Sigmoid colon (tissue), 7 donors: ENCODE measurements at regions of chr10 and their contacts with region 1.

Region 1: GRCh38 chr10:99945263-99945662 is 64.5 kb downstream of the DNMBP start:
- DNase-seq: peak; percentile 78
- H3K4me3 ChIP-seq: no peak overlapping the region
- H3K27ac ChIP-seq: peak overlapping the region in 3 of 4 donors; percentile 35 to 64 (median 48)
- H3K4me1 ChIP-seq: peaks cover 0 to 42% (median 25%) of the 10 kb centered on the region in 4 donors
- H3K27me3 ChIP-seq: no peaks in the 10 kb centered on the region
- CTCF ChIP-seq: no peak
- EP300 ChIP-seq: peak in 1 of 4 donors; percentile 16
- POLR2A ChIP-seq: no peak

Region 2: DNA sequence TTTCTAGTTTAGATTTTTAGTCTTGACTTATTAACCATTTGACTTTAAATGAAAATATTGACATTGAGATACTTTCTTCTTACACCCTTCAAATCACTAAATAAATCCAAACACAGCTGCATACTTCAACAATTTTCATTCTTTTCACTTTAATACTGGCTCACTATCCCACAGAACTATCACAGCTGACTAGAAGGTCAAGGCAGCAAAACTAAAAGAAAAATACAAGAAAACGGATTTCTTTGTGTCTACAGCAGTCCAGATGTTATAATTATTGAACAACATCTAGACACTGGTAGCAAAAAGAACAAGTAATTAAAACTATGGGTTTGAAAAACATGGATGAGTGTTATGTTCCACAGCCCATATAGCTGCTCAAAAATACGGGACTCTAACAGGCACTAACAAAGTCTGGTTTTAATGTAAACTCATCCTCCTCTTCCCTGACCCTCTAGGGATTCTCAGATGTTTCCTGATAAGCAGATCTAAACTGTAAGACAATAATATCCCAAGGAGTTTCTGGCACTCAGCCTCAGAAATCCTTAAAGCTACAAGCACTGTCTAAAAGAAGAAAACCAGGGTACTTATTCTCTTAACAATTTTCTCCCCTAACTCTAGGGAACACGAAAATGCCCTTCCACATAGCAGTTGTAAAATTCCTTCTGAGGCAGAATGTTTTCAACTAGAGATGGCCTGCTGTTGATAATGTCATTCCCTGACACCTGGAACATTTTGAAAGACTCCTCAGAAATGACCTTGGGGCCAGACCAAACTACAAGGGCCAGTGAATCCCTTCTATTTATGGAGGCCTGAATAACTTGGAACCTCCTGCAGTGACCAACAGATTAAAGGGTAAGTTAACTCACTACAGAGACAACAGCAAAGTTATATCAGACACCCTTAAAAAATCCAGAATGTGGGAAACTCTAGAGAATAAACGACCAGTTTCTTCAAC is 51.7 kb after region 1 on chr10:
- intact Hi-C with region 1: loop called (anchors 2 kb)
- DNase-seq: no peak
- H3K4me3 ChIP-seq: peak overlapping the region in 2 of 4 donors; percentile 5 to 23
- H3K27ac ChIP-seq: peak overlapping the region; percentile 2 to 78 (median 71)
- H3K4me1 ChIP-seq: peaks cover 0 to 81% (median 78%) of the 10 kb centered on the region in 4 donors
- H3K27me3 ChIP-seq: no peaks in the 10 kb centered on the region
- CTCF ChIP-seq: no peak
- EP300 ChIP-seq: no peak
- POLR2A ChIP-seq: no peak

Region 3: DNA sequence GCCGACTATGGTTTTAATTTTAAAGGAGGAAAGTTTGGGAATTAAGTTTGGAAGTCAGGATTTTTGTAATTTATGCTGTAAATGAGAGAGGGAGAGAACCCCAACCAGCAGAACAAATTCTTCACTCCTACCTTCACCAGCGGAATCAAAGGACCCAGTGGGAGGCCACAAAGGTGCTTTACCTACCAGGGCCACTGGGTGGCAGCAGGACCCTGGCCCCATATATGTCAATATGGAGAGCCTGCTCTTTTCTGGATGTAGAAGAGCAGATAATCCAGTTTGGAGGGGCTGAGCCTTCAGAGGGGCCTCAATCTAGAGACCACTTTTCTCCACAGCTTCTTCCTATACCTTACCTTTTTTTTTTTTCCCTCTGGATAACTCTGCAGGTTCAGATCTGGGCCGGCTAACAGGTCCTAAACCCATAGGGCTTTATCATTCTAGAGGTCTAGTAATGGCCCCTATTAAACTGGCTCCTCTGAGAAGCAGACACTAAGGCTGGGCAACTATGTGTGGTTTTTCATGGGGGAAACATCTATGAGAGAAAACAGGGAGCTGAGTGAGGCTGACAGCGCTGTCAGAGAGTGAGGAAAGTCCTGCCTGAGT is 393.3 kb after region 1 on chr10:
- intact Hi-C with region 1: no loop called
- DNase-seq: peak; percentile 85
- H3K4me3 ChIP-seq: no peak overlapping the region
- H3K27ac ChIP-seq: no peak overlapping the region
- H3K4me1 ChIP-seq: no peaks in the 10 kb centered on the region
- H3K27me3 ChIP-seq: peaks cover 0 to 6% (median 0%) of the 10 kb centered on the region in 3 donors
- CTCF ChIP-seq: peak; percentile 75 to 92 (median 88)
- EP300 ChIP-seq: no peak
- POLR2A ChIP-seq: no peak